ENCODE measurements at regions of chr19 and their contacts with region 1.

Region 1: DNA sequence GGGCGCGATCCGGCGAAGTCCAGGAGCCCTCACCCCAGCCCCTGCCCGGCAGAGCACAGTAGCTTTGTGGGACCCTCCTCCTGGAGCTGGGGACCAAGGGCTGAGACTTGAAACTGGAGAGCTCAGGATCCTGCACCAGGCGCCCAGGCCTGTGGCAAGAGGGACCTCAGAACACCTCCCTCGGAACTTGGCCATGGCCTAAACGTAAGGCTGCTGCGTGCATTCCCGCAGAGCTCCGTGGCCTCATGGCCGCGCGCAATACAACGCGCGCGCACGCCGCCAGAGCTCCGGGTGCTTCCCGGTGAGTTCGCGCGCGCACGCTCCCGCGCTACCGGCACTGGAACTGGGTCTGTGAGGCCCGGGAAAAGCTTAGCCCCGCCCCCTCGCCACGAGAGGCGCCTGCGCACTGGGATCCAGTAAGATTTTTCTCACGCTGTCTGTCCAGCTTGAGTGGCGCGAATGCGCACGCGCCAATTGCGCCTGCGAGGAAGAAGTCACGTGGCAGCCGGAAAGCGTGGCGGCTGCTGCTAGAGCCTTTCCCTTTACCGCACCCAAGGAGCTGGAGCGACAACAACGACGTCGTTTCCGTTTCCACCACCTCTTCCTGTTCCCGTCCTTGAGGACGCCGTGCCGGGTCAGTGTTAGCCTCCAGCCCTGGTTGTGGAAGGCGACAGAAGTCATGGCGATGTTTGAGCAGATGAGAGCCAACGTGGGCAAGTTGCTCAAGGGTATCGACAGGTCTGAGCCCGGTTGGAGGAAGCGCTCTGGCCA is at the start of gene EIF3K:
- DNase-seq: peak; percentile 96 to 98 (median 96)
- H3K4me3 ChIP-seq: peak within 1 kb of the TSS; percentile 75
- H3K4me3 Mint-ChIP-seq: peak within 1 kb of the TSS; percentile 96 to 100 (median 99)
- H3K27ac ChIP-seq: peak within 1 kb of the TSS; percentile 85
- H3K27ac Mint-ChIP-seq: peak within 1 kb of the TSS; percentile 92 to 100 (median 99)
- H3K4me1 ChIP-seq: peaks cover 46% of the 10 kb centered on the region
- H3K4me1 Mint-ChIP-seq: peaks cover 47 to 63% (median 63%) of the 10 kb centered on the region in 3 donors
- H3K27me3 ChIP-seq: no peaks in the 10 kb centered on the region
- H3K27me3 Mint-ChIP-seq: no peaks in the 10 kb centered on the region
- total RNA-seq, gene EIF3K: 275 to 282 TPM

Region 2: GRCh38 chr19:38514812-38515633 is 103.8 kb before region 1 on chr19:
- CTCF ChIA-PET with region 1: interaction called, 16 read pairs
- POLR2A ChIA-PET with region 1: no interaction called
- DNase-seq: peak; percentile 61 to 83 (median 68)
- H3K4me3 ChIP-seq: no peak overlapping the region
- H3K4me3 Mint-ChIP-seq: peak overlapping the region in 2 of 7 donors; percentile 15 to 29
- H3K27ac ChIP-seq: no peak overlapping the region
- H3K27ac Mint-ChIP-seq: peak overlapping the region in 4 of 8 donors; percentile 0 to 25 (median 16)
- H3K4me1 ChIP-seq: peaks cover 5% of the 10 kb centered on the region
- H3K4me1 Mint-ChIP-seq: peaks cover 8 to 20% (median 18%) of the 10 kb centered on the region in 3 donors
- H3K27me3 ChIP-seq: no peaks in the 10 kb centered on the region
- H3K27me3 Mint-ChIP-seq: peaks cover 0 to 3% of the 10 kb centered on the region in 2 donors

Region 3: DNA sequence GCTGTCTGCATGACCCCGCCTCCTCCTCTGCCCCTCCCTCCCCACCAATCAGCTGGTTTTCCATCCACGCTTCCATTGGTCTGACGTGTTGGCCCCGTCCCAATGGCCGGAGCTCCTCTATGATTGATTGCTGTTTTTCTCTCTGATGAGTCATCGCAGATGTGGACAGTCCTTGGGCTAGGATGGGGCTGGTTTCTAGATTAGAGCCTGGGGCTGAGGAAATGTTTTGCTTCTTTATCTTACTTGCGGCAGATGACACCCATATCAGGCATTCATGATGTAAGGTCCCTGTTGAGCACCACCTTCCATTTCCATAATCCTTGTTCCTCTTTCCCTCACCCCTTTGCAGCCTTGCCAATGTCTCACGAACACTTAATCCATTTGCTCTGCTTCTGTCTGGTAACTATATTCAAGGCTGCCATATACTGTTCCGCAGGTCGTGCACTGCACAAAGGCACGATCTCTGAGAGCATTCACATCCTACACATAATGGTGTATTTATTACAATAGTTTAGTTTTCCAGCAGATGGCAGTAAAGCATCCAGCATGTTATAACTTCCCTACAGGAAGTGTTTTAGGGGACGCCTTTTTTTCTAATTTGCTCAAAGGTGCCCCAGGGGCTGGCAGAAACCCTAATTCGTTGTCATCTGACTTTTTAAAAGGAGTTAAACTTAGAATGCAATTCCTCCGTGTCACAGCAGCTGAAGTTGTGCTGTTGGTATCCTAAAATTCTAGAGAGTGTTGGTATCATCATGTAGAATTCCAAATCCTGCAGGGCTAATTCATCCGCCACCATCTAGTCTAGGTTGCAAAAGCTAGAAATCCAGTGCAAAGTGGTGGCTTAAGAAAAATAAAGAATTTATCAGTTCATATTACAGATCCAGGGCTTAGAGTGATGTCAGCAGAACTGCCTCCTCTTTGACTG is 74.5 kb before region 1 on chr19:
- CTCF ChIA-PET with region 1: interaction called, 10 read pairs
- POLR2A ChIA-PET with region 1: interaction called, 6 read pairs
- DNase-seq: peak in 2 of 5 donors; percentile 55 to 60
- H3K4me3 ChIP-seq: peak overlapping the region; percentile 7
- H3K4me3 Mint-ChIP-seq: peak overlapping the region in 4 of 7 donors; percentile 12 to 42 (median 20)
- H3K27ac ChIP-seq: peak overlapping the region; percentile 41
- H3K27ac Mint-ChIP-seq: peak overlapping the region in 5 of 8 donors; percentile 2 to 84 (median 14)
- H3K4me1 ChIP-seq: peaks cover 19% of the 10 kb centered on the region
- H3K4me1 Mint-ChIP-seq: peaks cover 22 to 35% (median 34%) of the 10 kb centered on the region in 3 donors
- H3K27me3 ChIP-seq: no peaks in the 10 kb centered on the region
- H3K27me3 Mint-ChIP-seq: peaks cover 0 to 2% of the 10 kb centered on the region in 2 donors

Region 4: GRCh38 chr19:38551450-38551813 is 67.3 kb before region 1 on chr19:
- CTCF ChIA-PET with region 1: interaction called, 13 read pairs
- POLR2A ChIA-PET with region 1: no interaction called
- DNase-seq: no peak
- H3K4me3 ChIP-seq: no peak overlapping the region
- H3K4me3 Mint-ChIP-seq: peak overlapping the region; percentile 23 to 84 (median 46)
- H3K27ac ChIP-seq: no peak overlapping the region
- H3K27ac Mint-ChIP-seq: peak overlapping the region in 7 of 8 donors; percentile 15 to 83 (median 59)
- H3K4me1 ChIP-seq: peaks cover 14% of the 10 kb centered on the region
- H3K4me1 Mint-ChIP-seq: peaks cover 23 to 45% (median 35%) of the 10 kb centered on the region in 3 donors
- H3K27me3 ChIP-seq: no peaks in the 10 kb centered on the region
- H3K27me3 Mint-ChIP-seq: no peaks in the 10 kb centered on the region

Region 5: GRCh38 chr19:38666663-38667511 is 48.1 kb after region 1 on chr19:
- CTCF ChIA-PET with region 1: no interaction called
- POLR2A ChIA-PET with region 1: no interaction called
- DNase-seq: peak in 2 of 5 donors; percentile 42 to 64
- H3K4me3 ChIP-seq: no peak overlapping the region
- H3K4me3 Mint-ChIP-seq: peak overlapping the region; percentile 26 to 87 (median 80)
- H3K27ac ChIP-seq: peak overlapping the region; percentile 14
- H3K27ac Mint-ChIP-seq: peak overlapping the region; percentile 73 to 98 (median 94)
- H3K4me1 ChIP-seq: peaks cover 89% of the 10 kb centered on the region
- H3K4me1 Mint-ChIP-seq: peaks cover 86 to 99% (median 93%) of the 10 kb centered on the region in 3 donors
- H3K27me3 ChIP-seq: no peaks in the 10 kb centered on the region
- H3K27me3 Mint-ChIP-seq: no peaks in the 10 kb centered on the region

Measured in CD8-positive, alpha-beta memory T cell (primary cell).